Activated CD8-positive, alpha-beta T cell treated with anti-CD3 and anti-CD28 coated beads for 36 hours (primary cell): ENCODE measurements at regions of chr1 and their contacts with region 1.

Region 1: DNA sequence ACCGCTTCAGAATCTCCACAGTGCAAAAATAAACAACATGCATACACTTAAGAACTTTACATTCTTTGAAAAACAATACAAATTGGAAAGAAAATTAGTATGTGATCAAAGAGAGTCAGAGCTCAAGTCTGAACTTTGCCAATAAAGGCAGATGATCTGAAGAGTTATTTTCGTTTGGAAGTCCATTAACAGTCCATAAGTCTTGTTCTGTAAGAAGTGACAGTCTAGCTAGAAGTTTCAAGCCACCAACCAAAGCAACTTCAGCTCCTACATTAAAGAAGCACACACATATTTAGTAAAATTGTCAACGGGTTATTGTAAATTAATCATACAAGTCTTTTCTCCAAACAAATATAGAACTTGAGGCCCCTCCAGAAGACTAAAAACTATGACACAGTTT is 20.7 kb downstream of the ANGEL2 start:
- DNase-seq: no peak
- ATAC-seq: no peak
- H3K4me3 Mint-ChIP-seq: no peak overlapping the region
- H3K27ac Mint-ChIP-seq: no peak overlapping the region
- H3K4me1 Mint-ChIP-seq: peaks cover 3% of the 10 kb centered on the region
- H3K27me3 Mint-ChIP-seq: no peaks in the 10 kb centered on the region
- CTCF ChIP-seq: no peak

Region 2: GRCh38 chr1:212814537-212815334 is 180.2 kb before region 1 on chr1:
- CTCF ChIA-PET with region 1: interaction called, 35 read pairs
- POLR2A ChIA-PET with region 1: no interaction called
- intact Hi-C with region 1: loop called (anchors 5 kb)
- DNase-seq: peak; percentile 32
- ATAC-seq: no peak
- H3K4me3 Mint-ChIP-seq: no peak overlapping the region
- H3K27ac Mint-ChIP-seq: no peak overlapping the region
- H3K4me1 Mint-ChIP-seq: peaks cover 3% of the 10 kb centered on the region
- H3K27me3 Mint-ChIP-seq: no peaks in the 10 kb centered on the region
- CTCF ChIP-seq: peak; percentile 47

Region 3: GRCh38 chr1:212967801-212968200 is 27.1 kb before region 1 on chr1:
- CTCF ChIA-PET with region 1: interaction called, 14 read pairs
- POLR2A ChIA-PET with region 1: no interaction called
- intact Hi-C with region 1: no loop called
- DNase-seq: no peak
- ATAC-seq: peak; percentile 64
- H3K4me3 Mint-ChIP-seq: no peak overlapping the region
- H3K27ac Mint-ChIP-seq: no peak overlapping the region
- H3K4me1 Mint-ChIP-seq: peaks cover 7% of the 10 kb centered on the region
- H3K27me3 Mint-ChIP-seq: peaks cover 13% of the 10 kb centered on the region
- CTCF ChIP-seq: peak; percentile 32

Region 4: GRCh38 chr1:213083112-213083445 is 88.2 kb after region 1 on chr1:
- CTCF ChIA-PET with region 1: no interaction called
- POLR2A ChIA-PET with region 1: no interaction called
- intact Hi-C with region 1: no loop called
- DNase-seq: peak; percentile 20
- ATAC-seq: peak; percentile 76
- H3K4me3 Mint-ChIP-seq: no peak overlapping the region
- H3K27ac Mint-ChIP-seq: no peak overlapping the region
- H3K4me1 Mint-ChIP-seq: peaks cover 16% of the 10 kb centered on the region
- H3K27me3 Mint-ChIP-seq: no peaks in the 10 kb centered on the region
- CTCF ChIP-seq: no peak